Calu3 (cell line): ENCODE measurements at regions of chr12 and their contacts with region 1.

Region 1: GRCh38 chr12:19994970-19995369 is 373.4 kb upstream of the PDE3A start:
- DNase-seq: no peak
- H3K4me3 Mint-ChIP-seq: no peak overlapping the region
- H3K27ac Mint-ChIP-seq: no peak overlapping the region
- H3K4me1 Mint-ChIP-seq: peaks cover 42% of the 10 kb centered on the region
- H3K27me3 Mint-ChIP-seq: no peaks in the 10 kb centered on the region
- CTCF ChIP-seq: peak; percentile 23

Region 2: GRCh38 chr12:19744734-19745218 is 250.2 kb before region 1 on chr12:
- CTCF ChIA-PET with region 1: no interaction called
- intact Hi-C with region 1: loop called (anchors 10 kb)
- DNase-seq: peak; percentile 32
- H3K4me3 Mint-ChIP-seq: no peak overlapping the region
- H3K27ac Mint-ChIP-seq: peak overlapping the region; percentile 49
- H3K4me1 Mint-ChIP-seq: peaks cover 39% of the 10 kb centered on the region
- H3K27me3 Mint-ChIP-seq: no peaks in the 10 kb centered on the region
- CTCF ChIP-seq: no peak

Region 3: GRCh38 chr12:19915392-19916195 is 79.4 kb before region 1 on chr12:
- CTCF ChIA-PET with region 1: no interaction called
- intact Hi-C with region 1: loop called (anchors 2 kb)
- DNase-seq: peak; percentile 32
- H3K4me3 Mint-ChIP-seq: no peak overlapping the region
- H3K27ac Mint-ChIP-seq: peak overlapping the region; percentile 41
- H3K4me1 Mint-ChIP-seq: peaks cover 44% of the 10 kb centered on the region
- H3K27me3 Mint-ChIP-seq: no peaks in the 10 kb centered on the region
- CTCF ChIP-seq: peak; percentile 63

Region 4: GRCh38 chr12:19967486-19967885 is 27.5 kb before region 1 on chr12:
- CTCF ChIA-PET with region 1: no interaction called
- intact Hi-C with region 1: loop called (anchors 1 kb)
- DNase-seq: peak; percentile 49
- H3K4me3 Mint-ChIP-seq: peak overlapping the region; percentile 35
- H3K27ac Mint-ChIP-seq: peak overlapping the region; percentile 95
- H3K4me1 Mint-ChIP-seq: peaks cover 47% of the 10 kb centered on the region
- H3K27me3 Mint-ChIP-seq: no peaks in the 10 kb centered on the region
- CTCF ChIP-seq: no peak

Region 5: DNA sequence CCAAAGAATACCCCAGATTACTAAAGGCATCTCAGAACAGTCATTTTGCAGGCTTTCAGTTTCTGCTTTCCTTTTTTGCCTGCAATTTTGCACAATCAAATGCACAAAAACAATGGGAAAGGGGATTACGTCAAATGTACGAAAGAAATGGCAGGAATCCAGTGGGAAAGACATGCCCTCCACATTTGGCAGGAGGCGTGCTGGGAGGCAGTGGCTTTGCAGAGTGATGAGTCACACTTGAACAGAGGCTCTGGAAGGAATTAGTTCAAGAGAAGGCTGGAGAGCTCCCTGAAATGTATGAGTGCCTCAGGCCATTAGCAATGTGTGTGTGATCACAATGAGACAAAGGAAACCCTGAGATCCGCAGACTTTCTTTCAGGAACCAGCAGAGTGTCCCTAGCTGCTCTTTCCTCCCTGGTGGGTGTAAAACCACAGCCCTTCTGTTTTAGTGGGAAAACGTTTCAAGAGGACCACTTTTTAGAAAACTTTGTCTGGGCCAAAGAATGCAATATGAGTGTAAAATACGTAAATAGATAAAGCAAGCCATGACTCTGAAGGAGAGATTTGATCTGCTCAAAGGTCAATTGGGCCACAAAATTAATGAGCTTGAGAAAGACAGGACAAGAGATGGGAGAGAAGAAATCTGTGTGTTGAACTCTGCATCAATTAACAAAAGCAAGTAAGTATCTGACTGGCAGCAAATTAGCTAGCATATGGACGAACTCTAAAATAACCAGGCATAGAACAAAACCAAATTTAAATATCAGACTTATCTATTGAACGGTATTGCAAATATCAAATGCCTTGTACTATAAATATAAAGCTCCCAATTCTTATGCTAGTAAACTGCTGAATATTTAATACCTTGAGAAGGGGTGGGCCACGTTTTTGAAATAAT is 217.9 kb after region 1 on chr12:
- CTCF ChIA-PET with region 1: no interaction called
- intact Hi-C with region 1: loop called (anchors 5 kb)
- DNase-seq: peak; percentile 63
- H3K4me3 Mint-ChIP-seq: peak overlapping the region; percentile 34
- H3K27ac Mint-ChIP-seq: peak overlapping the region; percentile 78
- H3K4me1 Mint-ChIP-seq: peaks cover 22% of the 10 kb centered on the region
- H3K27me3 Mint-ChIP-seq: no peaks in the 10 kb centered on the region
- CTCF ChIP-seq: no peak

Region 6: DNA sequence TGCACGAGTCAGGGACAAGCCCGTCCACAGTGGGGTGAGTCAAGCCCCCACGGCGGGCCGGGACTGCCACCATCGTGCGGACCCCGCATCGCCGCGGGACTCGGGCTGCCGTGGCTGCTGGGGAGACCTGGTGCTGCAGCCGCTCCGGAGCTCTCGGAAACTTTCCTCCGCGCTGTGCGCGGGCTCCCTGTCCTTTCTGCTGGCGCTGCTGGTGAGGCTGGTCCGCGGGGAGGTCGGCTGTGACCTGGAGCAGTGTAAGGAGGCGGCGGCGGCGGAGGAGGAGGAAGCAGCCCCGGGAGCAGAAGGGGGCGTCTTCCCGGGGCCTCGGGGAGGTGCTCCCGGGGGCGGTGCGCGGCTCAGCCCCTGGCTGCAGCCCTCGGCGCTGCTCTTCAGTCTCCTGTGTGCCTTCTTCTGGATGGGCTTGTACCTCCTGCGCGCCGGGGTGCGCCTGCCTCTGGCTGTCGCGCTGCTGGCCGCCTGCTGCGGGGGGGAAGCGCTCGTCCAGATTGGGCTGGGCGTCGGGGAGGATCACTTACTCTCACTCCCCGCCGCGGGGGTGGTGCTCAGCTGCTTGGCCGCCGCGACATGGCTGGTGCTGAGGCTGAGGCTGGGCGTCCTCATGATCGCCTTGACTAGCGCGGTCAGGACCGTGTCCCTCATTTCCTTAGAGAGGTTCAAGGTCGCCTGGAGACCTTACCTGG is 374.5 kb after region 1 on chr12:
- CTCF ChIA-PET with region 1: no interaction called
- intact Hi-C with region 1: loop called (anchors 5 kb)
- DNase-seq: peak; percentile 75
- H3K4me3 Mint-ChIP-seq: peak overlapping the region; percentile 94
- H3K27ac Mint-ChIP-seq: peak overlapping the region; percentile 78
- H3K4me1 Mint-ChIP-seq: peaks cover 35% of the 10 kb centered on the region
- H3K27me3 Mint-ChIP-seq: no peaks in the 10 kb centered on the region
- CTCF ChIP-seq: no peak